Activated CD4-positive, alpha-beta T cell treated with anti-CD3 and anti-CD28 coated beads for 36 hours (primary cell): ENCODE measurements at regions of chr1 and their contacts with region 1.

Region 1: DNA sequence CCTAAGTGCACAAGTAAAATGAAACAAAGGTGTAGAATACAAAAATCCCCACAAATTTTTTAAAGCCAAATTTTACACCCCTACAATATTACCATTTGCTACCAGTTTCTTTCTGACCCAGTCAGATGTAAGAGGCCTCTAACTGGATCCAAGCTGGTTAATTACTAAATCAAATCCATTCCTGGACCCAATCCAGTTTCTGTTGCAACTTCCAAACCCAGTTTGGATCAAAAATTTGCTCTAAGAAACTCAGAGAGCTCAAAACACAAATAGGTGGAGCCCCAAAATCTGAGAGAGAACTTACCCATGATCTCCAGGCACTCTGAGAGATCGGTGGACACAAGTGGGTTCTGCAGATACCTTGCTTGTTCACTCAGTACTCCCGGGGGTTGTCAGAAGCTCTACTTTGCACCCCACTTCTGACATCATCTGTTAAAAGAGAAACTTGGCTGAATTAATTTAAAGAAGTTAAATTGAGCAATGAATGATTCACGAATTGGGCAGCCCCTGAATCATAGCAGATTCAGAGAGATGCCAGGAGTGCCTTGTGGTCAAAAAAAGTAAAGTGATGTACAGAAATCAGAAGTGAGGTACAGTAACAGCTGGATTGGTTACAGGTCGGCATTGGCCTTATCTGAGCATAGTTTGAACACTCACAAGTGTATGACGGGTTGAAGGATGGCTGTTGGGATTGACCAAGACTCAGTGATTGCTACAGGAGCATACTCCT is 448.0 kb downstream of the KCNT2 start:
- DNase-seq: no peak
- ATAC-seq: no peak
- H3K4me3 Mint-ChIP-seq: no peak overlapping the region
- H3K27ac Mint-ChIP-seq: no peak overlapping the region
- H3K4me1 Mint-ChIP-seq: no peaks in the 10 kb centered on the region
- H3K27me3 Mint-ChIP-seq: no peaks in the 10 kb centered on the region

Region 2: GRCh38 chr1:194684636-194685035 is 1475.6 kb before region 1 on chr1:
- CTCF ChIA-PET with region 1: no interaction called
- POLR2A ChIA-PET with region 1: no interaction called
- intact Hi-C with region 1: loop called in 1 of 2 experiments (anchors 5 kb)
- DNase-seq: no peak
- ATAC-seq: no peak
- H3K4me3 Mint-ChIP-seq: no peak overlapping the region
- H3K27ac Mint-ChIP-seq: no peak overlapping the region
- H3K4me1 Mint-ChIP-seq: no peaks in the 10 kb centered on the region
- H3K27me3 Mint-ChIP-seq: no peaks in the 10 kb centered on the region

Region 3: GRCh38 chr1:195738966-195739655 is 421.1 kb before region 1 on chr1:
- CTCF ChIA-PET with region 1: no interaction called
- POLR2A ChIA-PET with region 1: no interaction called
- intact Hi-C with region 1: no loop called
- DNase-seq: no peak
- ATAC-seq: no peak
- H3K4me3 Mint-ChIP-seq: no peak overlapping the region
- H3K27ac Mint-ChIP-seq: no peak overlapping the region
- H3K4me1 Mint-ChIP-seq: no peaks in the 10 kb centered on the region
- H3K27me3 Mint-ChIP-seq: no peaks in the 10 kb centered on the region